ENCODE measurements at regions of chrX and their contacts with region 1.

Region 1: DNA sequence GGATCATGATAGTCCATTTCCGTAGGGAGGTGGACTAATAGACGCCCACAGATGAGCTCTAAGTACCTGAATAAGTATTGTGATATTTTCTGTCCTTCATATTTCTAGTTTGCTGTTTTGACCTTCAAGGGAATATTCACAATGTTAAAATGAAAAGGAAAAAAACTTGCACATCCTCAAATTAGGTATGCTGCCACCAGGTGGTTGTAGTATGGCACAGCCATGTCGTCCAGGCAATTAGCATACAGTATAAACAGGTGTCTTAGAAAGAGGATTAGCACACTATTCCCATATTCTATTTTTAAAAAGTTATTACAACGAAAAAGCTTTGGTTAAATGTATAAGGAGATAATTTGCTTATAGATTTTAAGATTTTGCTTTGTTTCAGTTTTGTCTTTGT is 802.0 kb downstream of the RPA4 start:
- DNase-seq: peak; percentile 19 to 27
- H3K4me3 ChIP-seq: no peak overlapping the region
- H3K4me3 Mint-ChIP-seq: no peak overlapping the region
- H3K27ac Mint-ChIP-seq: no peak overlapping the region
- H3K4me1 ChIP-seq: no peaks in the 10 kb centered on the region
- H3K4me1 Mint-ChIP-seq: no peaks in the 10 kb centered on the region
- H3K27me3 ChIP-seq: no peaks in the 10 kb centered on the region
- H3K27me3 Mint-ChIP-seq: peaks cover 5% of the 10 kb centered on the region
- CTCF ChIP-seq: peak; percentile 21 to 50

Region 2: GRCh38 chrX:96770315-96770714 is 915.4 kb before region 1 on chrX:
- CTCF ChIA-PET with region 1: no interaction called
- POLR2A ChIA-PET with region 1: no interaction called
- intact Hi-C with region 1: loop called (anchors 2 kb)
- DNase-seq: peak in 1 of 2 experiments; percentile 1
- H3K4me3 ChIP-seq: no peak overlapping the region
- H3K4me3 Mint-ChIP-seq: no peak overlapping the region
- H3K27ac Mint-ChIP-seq: no peak overlapping the region
- H3K4me1 ChIP-seq: no peaks in the 10 kb centered on the region
- H3K4me1 Mint-ChIP-seq: no peaks in the 10 kb centered on the region
- H3K27me3 ChIP-seq: no peaks in the 10 kb centered on the region
- H3K27me3 Mint-ChIP-seq: no peaks in the 10 kb centered on the region
- CTCF ChIP-seq: peak in 1 of 2 experiments; percentile 23

Region 3: GRCh38 chrX:97026406-97026805 is 659.3 kb before region 1 on chrX:
- CTCF ChIA-PET with region 1: no interaction called
- POLR2A ChIA-PET with region 1: no interaction called
- intact Hi-C with region 1: loop called (anchors 2 kb)
- DNase-seq: no peak
- H3K4me3 ChIP-seq: no peak overlapping the region
- H3K4me3 Mint-ChIP-seq: no peak overlapping the region
- H3K27ac Mint-ChIP-seq: no peak overlapping the region
- H3K4me1 ChIP-seq: no peaks in the 10 kb centered on the region
- H3K4me1 Mint-ChIP-seq: no peaks in the 10 kb centered on the region
- H3K27me3 ChIP-seq: no peaks in the 10 kb centered on the region
- H3K27me3 Mint-ChIP-seq: no peaks in the 10 kb centered on the region
- CTCF ChIP-seq: peak in 1 of 2 experiments; percentile 6